Heart right ventricle (tissue), 16 donors: ENCODE measurements at regions of chr1 and their contacts with region 1.

Region 1: DNA sequence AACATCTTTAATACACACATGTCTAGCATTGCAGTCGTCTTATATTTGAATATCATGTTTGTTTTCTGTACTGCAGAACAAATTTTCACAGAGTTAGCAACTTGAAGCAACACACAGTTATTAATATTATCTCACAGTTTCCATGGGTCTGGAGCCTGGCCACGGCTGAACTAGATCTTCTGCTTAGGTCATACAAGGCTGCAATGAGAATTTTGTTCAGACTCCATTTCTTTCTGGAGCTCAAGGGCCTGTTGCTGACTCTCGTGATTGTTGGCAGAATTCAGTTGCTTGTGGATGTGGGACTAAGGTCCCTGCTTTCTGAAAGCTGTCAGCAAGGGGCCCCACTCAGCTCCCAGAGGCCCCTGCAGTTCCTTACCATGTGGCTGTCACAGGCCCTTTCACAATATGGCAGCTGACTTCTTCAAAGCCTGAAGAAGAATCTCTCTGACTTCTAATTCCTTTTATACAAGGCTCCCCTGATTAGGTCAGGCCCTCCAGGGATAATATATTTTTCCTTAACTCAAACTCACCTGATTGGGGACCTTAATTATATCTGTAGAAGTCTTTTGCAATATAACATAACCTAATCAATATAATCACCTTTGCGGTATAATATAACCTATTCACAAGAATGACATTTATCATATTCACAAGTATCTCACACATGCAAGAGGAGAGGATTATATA is 296.3 kb downstream of the NFIA start:
- DNase-seq: no peak
- ATAC-seq: peak in 3 of 8 donors; percentile 27 to 37 (median 34)
- H3K4me3 ChIP-seq: no peak overlapping the region
- H3K27ac ChIP-seq: peak overlapping the region in 9 of 10 donors; percentile 36 to 68 (median 54)
- H3K4me1 ChIP-seq: peaks cover 4 to 47% (median 27%) of the 10 kb centered on the region in 9 donors
- H3K27me3 ChIP-seq: no peaks in the 10 kb centered on the region
- CTCF ChIP-seq: no peak

Region 2: DNA sequence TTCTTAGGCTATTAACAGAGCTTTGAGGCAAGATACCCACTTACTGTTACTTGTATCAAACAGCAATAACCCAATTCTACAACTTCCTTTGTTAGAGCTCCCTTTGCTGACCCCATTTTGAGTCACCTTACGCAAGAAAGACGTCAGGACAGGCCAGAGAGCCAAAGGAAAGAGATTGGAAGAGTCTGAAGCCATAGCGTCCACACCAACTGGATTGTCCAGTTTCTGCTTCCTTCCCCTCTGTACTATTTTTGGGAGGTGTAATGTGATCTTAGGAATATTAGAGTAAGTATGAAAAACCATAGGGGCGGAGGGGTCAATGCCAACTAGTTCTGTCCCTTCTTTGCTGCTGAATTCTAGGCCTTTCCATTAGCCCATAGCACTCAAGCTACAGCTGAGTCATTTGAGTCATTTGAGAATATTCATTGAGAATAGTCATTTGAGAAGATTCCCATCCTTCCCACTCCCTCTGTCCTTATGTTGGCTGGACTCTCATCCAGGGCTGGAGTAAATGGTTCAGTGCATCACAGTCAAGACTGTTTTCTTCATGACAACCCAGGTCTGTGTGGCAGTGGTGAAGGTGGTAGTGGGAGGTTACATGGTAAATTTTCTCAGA is 311.1 kb before region 1 on chr1:
- intact Hi-C with region 1: no loop called
- DNase-seq: no peak
- ATAC-seq: no peak
- H3K4me3 ChIP-seq: no peak overlapping the region
- H3K27ac ChIP-seq: no peak overlapping the region
- H3K4me1 ChIP-seq: no peaks in the 10 kb centered on the region
- H3K27me3 ChIP-seq: no peaks in the 10 kb centered on the region
- CTCF ChIP-seq: no peak

Region 3: DNA sequence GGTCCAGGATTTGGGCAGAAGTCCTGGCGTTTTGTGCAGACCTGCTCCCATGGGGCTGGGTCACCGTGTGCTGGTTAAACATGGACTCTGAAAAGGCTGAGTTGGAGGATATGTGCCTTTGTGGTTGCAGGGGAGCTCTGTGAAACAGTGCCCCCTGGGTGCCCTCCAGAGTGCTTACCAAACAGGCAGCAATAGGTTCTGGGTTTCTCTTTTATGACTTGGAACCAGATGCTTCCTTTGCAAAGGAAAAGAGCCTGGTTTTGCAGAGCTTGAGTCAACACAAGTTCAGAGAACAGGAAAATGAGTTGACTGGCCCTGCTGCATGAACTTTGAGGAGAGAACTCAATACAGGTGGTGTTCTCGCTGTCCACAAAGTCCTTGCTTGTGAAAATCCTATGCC is 57.4 kb after region 1 on chr1:
- intact Hi-C with region 1: loop called in 1 of 10 experiments (anchors 5 kb)
- DNase-seq: no peak
- ATAC-seq: peak in 7 of 8 donors; percentile 6 to 68 (median 23)
- H3K4me3 ChIP-seq: no peak overlapping the region
- H3K27ac ChIP-seq: peak overlapping the region; percentile 47 to 80 (median 69)
- H3K4me1 ChIP-seq: peaks cover 4 to 65% (median 53%) of the 10 kb centered on the region in 9 donors
- H3K27me3 ChIP-seq: no peaks in the 10 kb centered on the region
- CTCF ChIP-seq: peak in 6 of 9 donors; percentile 6 to 47 (median 31)